Mammary epithelial cell (primary cell): ENCODE measurements at regions of chr17 and their contacts with region 1.

Region 1: DNA sequence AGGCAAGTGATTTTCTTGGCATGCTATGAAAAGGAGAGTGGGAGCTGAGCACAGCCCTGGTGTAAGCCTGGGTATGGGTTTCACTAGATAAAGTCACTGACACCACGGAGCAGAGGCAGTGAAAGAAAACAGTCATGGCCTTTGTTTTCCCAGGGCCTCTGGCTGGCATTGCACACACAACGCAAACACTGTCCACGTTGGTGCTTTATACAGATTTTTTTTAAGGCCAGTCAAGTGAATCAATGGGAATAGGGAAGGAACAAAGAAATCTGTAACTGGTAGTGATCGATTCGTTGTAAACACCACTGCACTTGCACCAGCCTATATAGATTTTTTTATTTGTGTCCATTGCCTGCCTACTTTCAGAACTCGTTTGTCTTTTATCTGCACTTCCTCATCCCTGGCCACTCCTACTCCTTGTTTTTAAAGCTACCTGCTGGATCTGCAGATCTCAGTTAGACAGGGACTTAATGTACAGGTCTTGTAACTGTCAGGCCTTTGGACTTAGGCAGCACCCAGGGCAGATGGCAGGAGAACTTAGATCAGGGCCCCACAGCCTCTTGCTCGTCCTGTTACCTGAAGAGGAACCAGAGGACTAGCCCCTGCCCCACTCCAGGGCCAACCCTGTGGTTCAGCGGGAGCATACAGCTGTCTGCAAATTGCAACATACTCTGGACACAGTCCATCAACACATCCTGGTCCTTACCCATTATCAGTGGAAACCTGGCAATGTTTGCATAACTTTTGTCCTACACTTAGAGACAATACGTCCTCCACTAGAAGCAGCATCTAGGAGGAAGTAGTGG is 10.6 kb upstream of the TMIGD1 start:
- DNase-seq: peak; percentile 32
- H3K4me3 ChIP-seq: no peak overlapping the region
- H3K27ac ChIP-seq: no peak overlapping the region
- H3K4me1 ChIP-seq: peaks cover 28% of the 10 kb centered on the region
- H3K27me3 ChIP-seq: no peaks in the 10 kb centered on the region
- CTCF ChIP-seq: no peak

Region 2: DNA sequence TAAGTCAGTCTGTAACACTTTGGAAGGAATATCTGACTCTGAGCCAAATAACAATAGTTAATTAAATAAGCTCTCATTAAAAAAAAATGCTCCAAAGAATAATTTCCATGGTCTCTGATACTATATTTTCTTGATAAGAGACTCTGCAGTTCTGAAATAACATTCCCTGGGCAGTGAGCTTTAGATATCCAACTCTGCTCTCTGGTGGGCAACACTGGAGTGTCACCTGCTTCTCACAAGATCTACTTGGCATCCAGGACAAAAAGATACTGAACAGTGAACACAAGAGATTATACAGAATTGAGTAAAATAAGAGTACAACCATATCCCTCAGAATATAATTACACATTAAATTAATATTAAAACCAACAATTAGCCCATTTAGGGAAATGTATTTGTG is 66.5 kb before region 1 on chr17:
- CTCF ChIA-PET with region 1: no interaction called
- dilution Hi-C with region 1: loop called (anchors 5 kb)
- in situ Hi-C with region 1: no loop called
- intact Hi-C with region 1: no loop called
- DNase-seq: no peak
- H3K4me3 ChIP-seq: no peak overlapping the region
- H3K27ac ChIP-seq: no peak overlapping the region
- H3K4me1 ChIP-seq: no peaks in the 10 kb centered on the region
- H3K27me3 ChIP-seq: peaks cover 43% of the 10 kb centered on the region
- CTCF ChIP-seq: peak; percentile 15 to 16

Region 3: GRCh38 chr17:30318155-30318554 is 26.3 kb before region 1 on chr17:
- CTCF ChIA-PET with region 1: no interaction called
- dilution Hi-C with region 1: no loop called
- in situ Hi-C with region 1: no loop called
- intact Hi-C with region 1: no loop called
- DNase-seq: peak; percentile 20
- H3K4me3 ChIP-seq: no peak overlapping the region
- H3K27ac ChIP-seq: no peak overlapping the region
- H3K4me1 ChIP-seq: no peaks in the 10 kb centered on the region
- H3K27me3 ChIP-seq: peaks cover 26% of the 10 kb centered on the region
- CTCF ChIP-seq: no peak

Region 4: DNA sequence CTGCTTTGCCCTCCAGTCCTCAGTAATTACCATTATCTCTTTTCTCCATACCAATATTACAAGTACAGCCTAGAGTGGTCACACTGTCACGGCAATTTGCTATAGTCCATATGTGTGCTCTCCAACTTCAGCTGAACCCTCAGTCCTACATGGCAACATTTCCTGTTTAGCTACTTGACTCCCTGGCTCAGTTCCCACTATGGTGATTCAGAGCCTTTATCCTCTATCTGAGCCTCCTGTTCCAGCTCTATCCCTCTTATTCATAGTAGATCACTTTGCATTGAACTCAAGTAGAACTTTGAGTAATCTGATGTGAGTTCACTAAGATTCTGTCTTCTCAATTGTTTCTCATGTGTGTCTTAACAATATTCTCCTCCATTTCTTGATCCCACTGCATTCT is 89.0 kb after region 1 on chr17:
- CTCF ChIA-PET with region 1: no interaction called
- dilution Hi-C with region 1: loop called (anchors 5 kb)
- in situ Hi-C with region 1: no loop called
- intact Hi-C with region 1: no loop called
- DNase-seq: peak; percentile 85
- H3K4me3 ChIP-seq: no peak overlapping the region
- H3K27ac ChIP-seq: no peak overlapping the region
- H3K4me1 ChIP-seq: peaks cover 8% of the 10 kb centered on the region
- H3K27me3 ChIP-seq: no peaks in the 10 kb centered on the region
- CTCF ChIP-seq: no peak

Region 5: DNA sequence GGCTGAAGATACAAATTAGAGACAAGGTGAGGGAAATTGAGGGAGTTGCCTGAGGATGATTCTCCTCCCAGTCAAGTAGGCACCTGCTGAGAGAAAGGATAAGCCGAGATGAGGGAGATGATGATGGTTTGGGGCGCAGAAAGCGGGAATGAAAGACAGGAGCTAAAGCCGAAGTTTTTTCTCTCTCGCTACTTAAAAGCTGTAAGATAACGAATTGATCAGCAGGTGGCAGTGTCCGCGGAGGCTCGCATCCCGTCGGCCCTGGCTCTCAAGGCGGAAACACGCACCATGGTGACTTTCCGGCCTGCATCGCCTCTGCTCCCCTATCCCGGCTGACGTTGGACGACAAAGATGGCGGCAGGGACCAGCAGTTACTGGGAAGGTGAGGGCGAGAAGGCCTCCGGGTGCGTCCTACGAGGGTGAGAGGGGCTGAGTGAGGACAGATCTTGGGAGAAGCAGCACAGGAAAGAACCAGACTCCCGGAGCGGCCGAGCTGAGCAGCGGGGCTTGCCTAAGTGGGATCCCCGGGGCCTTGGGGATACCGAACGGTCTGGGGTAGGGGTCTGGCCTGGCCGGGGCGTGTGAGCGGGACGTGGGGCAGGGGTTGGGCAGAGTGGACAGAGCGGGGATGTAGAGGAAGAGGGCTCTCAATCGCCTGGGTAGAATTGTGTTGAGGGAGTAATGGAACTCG is 132.7 kb after region 1 on chr17 and contains the start of gene GOSR1:
- CTCF ChIA-PET with region 1: no interaction called
- dilution Hi-C with region 1: no loop called
- in situ Hi-C with region 1: no loop called
- intact Hi-C with region 1: loop called (anchors 1 kb)
- DNase-seq: peak; percentile 90
- H3K4me3 ChIP-seq: peak within 1 kb of the TSS; percentile 81 to 99 (median 86)
- H3K27ac ChIP-seq: peak within 1 kb of the TSS; percentile 91
- H3K4me1 ChIP-seq: peaks cover 17% of the 10 kb centered on the region
- H3K27me3 ChIP-seq: no peaks in the 10 kb centered on the region
- CTCF ChIP-seq: peak; percentile 59 to 79
- total RNA-seq, gene GOSR1: 27.8 to 54.6 TPM

Region 6: DNA sequence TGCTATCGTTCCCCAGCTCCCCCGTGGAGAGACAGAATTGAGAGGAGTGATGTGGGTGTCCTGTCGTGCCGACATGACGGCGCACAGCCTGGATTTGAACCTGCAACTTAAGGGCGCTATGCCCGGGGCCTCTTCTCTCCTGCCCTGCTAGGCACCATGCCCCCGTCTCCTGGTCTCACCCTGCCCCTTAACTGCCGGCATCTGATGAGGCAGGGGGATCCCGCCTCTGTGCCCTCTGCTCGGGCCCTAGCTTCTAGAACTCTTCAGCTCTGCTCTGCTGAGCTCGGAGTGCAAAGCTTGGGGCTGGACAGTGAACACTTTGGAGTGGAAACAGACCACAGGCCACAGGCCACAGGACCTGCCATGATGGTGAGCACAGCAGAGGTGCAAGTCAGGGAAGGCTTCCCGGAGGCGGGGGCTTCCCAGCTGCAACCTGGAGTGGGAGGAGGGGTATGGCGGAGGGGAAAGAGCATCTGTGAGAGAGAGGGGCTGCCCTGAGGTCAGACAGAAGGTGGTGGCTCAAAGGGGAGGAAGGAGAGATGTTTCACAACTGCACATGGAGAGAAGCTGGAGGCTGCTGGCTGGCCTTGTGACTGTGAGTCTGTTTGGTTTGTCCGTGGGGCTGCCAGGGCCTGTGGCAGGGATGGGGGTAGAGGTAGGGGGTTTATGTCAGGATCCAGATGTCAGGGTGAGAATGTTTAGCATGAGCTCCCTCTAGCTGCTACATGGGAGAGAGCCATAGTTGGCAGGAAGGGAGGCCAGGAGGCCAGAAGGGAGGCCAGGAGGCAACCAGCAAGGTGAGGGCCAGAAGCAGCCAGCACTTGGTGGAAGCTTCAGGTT is 372.2 kb after region 1 on chr17:
- CTCF ChIA-PET with region 1: no interaction called
- dilution Hi-C with region 1: no loop called
- in situ Hi-C with region 1: no loop called
- intact Hi-C with region 1: loop called (anchors 1 kb)
- DNase-seq: no peak
- H3K4me3 ChIP-seq: no peak overlapping the region
- H3K27ac ChIP-seq: no peak overlapping the region
- H3K4me1 ChIP-seq: no peaks in the 10 kb centered on the region
- H3K27me3 ChIP-seq: no peaks in the 10 kb centered on the region
- CTCF ChIP-seq: peak in 1 of 2 donors; percentile 23